Activated CD4-positive, alpha-beta T cell treated with anti-CD3 and anti-CD28 coated beads, Interleukin-2, amount 10 ng/mL, durations not matched to agents 24 days and 14 days (primary cell): ENCODE measurements at regions of chrX and their contacts with region 1.

Region 1: GRCh38 chrX:69538321-69538876 is 34.3 kb downstream of the NALF2 start:
- DNase-seq: peak; percentile 91
- H3K4me3 Mint-ChIP-seq: peak overlapping the region; percentile 60
- H3K27ac Mint-ChIP-seq: peak overlapping the region; percentile 34
- H3K4me1 Mint-ChIP-seq: peaks cover 14% of the 10 kb centered on the region
- H3K27me3 Mint-ChIP-seq: no peaks in the 10 kb centered on the region

Region 2: GRCh38 chrX:68693481-68694434 is 844.6 kb before region 1 on chrX:
- intact Hi-C with region 1: no loop called
- DNase-seq: peak; percentile 67
- H3K4me3 Mint-ChIP-seq: peak overlapping the region; percentile 79
- H3K27ac Mint-ChIP-seq: peak overlapping the region; percentile 58
- H3K4me1 Mint-ChIP-seq: peaks cover 28% of the 10 kb centered on the region
- H3K27me3 Mint-ChIP-seq: no peaks in the 10 kb centered on the region

Region 3: GRCh38 chrX:69615779-69616456 is 77.5 kb after region 1 on chrX and contains the start of gene EDA:
- intact Hi-C with region 1: loop called (anchors 1 kb)
- DNase-seq: peak; percentile 92
- H3K4me3 Mint-ChIP-seq: peak within 1 kb of the TSS; percentile 83
- H3K27ac Mint-ChIP-seq: no peak within 1 kb of the TSS
- H3K4me1 Mint-ChIP-seq: peaks cover 9% of the 10 kb centered on the region
- H3K27me3 Mint-ChIP-seq: peaks cover 12% of the 10 kb centered on the region
- total RNA-seq, gene EDA: 1.2 and 1.8 TPM in 2 replicates

Region 4: DNA sequence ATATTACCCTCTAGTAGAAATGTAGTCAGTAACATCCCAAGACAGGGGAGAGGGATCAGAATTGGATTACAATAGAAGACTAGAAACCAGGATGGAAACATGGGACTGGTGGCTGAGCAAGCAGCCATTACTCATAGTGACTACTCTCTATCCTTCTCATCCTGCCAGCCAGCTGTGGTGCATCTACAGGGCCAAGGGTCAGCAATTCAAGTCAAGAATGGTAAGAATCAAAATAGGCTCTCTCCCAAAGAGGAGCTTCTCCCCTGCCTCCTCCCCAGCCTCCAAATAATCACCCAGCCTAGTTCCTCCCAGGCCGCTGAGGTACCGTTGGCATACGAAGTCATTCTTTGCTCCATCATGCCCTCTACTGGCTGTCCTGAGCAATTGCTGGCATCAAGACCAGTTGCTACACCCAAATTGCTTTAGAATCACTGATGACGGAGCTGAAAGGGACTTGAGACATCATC is 491.9 kb after region 1 on chrX:
- intact Hi-C with region 1: loop called (anchors 2 kb)
- DNase-seq: peak; percentile 83
- H3K4me3 Mint-ChIP-seq: no peak overlapping the region
- H3K27ac Mint-ChIP-seq: no peak overlapping the region
- H3K4me1 Mint-ChIP-seq: peaks cover 20% of the 10 kb centered on the region
- H3K27me3 Mint-ChIP-seq: no peaks in the 10 kb centered on the region

Region 5: DNA sequence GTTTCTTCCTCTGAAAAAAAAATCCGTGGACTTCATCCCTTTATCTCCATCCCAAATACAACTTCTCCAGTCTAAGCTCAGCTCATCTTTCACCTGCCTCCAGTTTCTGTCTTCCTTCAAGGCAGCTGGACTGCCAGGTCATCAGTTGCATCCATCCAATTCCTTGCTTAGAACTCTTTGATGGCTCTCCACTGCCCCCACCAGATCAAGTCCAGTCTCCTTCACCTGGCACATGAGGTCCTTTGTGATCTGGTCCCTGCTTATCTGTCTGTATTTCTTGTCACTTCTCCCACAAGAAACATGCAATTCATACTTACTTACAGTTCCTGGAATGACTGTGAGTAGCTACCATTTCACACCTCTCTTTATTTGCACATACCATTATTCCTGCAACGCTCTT is 557.7 kb after region 1 on chrX:
- intact Hi-C with region 1: loop called (anchors 2 kb)
- DNase-seq: no peak
- H3K4me3 Mint-ChIP-seq: no peak overlapping the region
- H3K27ac Mint-ChIP-seq: no peak overlapping the region
- H3K4me1 Mint-ChIP-seq: no peaks in the 10 kb centered on the region
- H3K27me3 Mint-ChIP-seq: peaks cover 3% of the 10 kb centered on the region